ENCODE measurements at regions of chr16 and their contacts with region 1.

Region 1: GRCh38 chr16:1964506-1965395 is at the start of gene RPS2:
- DNase-seq: peak; percentile 95 to 100 (median 98)
- ATAC-seq: peak; percentile 73
- H3K4me3 ChIP-seq: peak within 1 kb of the TSS; percentile 89
- H3K27ac ChIP-seq: peak within 1 kb of the TSS; percentile 85
- H3K4me1 ChIP-seq: peaks cover 8 to 50% of the 10 kb centered on the region in 2 experiments; a peak in 3 of 5 replicates
- H3K27me3 ChIP-seq: no peaks in the 10 kb centered on the region
- CTCF ChIP-seq: no peak
- EP300 ChIP-seq: no peak
- POLR2A ChIP-seq: peak; percentile 100
- RAD21 ChIP-seq: no peak
- polyA plus RNA-seq, gene RPS2: 834 to 1,305 TPM

Region 2: DNA sequence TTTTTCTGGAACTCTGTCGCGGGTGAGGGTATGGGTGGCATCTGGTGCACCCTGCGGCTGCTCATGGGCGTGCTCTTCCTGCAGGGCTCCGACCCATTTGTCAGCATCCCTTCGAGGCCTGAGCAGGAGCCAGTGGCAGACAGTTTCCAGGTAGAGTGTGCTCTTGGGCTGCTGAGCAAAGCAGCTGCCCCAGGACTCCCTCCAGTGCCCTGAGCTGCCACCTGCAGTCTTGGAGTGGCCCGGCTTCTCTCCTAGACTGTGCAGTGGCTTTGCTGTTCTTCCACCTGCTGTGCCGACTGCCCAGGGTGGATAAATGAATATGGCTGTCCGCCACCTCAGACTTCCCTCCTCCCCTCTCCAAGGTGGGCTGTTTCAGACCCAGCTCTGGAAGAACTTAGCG is 297.5 kb before region 1 on chr16:
- CTCF ChIA-PET with region 1: no interaction called
- POLR2A ChIA-PET with region 1: no interaction called
- in situ Hi-C with region 1: no loop called
- intact Hi-C with region 1: no loop called
- DNase-seq: no peak
- ATAC-seq: no peak
- H3K4me3 ChIP-seq: no peak overlapping the region
- H3K27ac ChIP-seq: no peak overlapping the region
- H3K4me1 ChIP-seq: no peaks in the 10 kb centered on the region
- H3K27me3 ChIP-seq: no peaks in the 10 kb centered on the region
- CTCF ChIP-seq: peak in 1 of 3 experiments; percentile 5; a peak in 1 of 6 replicates
- EP300 ChIP-seq: no peak
- POLR2A ChIP-seq: no peak
- RAD21 ChIP-seq: no peak

Region 3: GRCh38 chr16:1772736-1773584 is 191.8 kb before region 1 on chr16 and contains the starts of genes EME2 and MRPS34:
- CTCF ChIA-PET with region 1: no interaction called
- POLR2A ChIA-PET with region 1: interaction called, 11 read pairs
- in situ Hi-C with region 1: no loop called
- intact Hi-C with region 1: no loop called
- DNase-seq: peak; percentile 72 to 93 (median 80)
- ATAC-seq: peak; percentile 75
- H3K4me3 ChIP-seq: peak within 1 kb of the TSS; percentile 96
- H3K27ac ChIP-seq: peak within 1 kb of the TSS; percentile 96
- H3K4me1 ChIP-seq: peaks cover 20 to 97% of the 10 kb centered on the region in 2 experiments; a peak in 4 of 5 replicates
- H3K27me3 ChIP-seq: no peaks in the 10 kb centered on the region
- CTCF ChIP-seq: peak; percentile 77 to 86 (median 80)
- EP300 ChIP-seq: no peak
- POLR2A ChIP-seq: peak; percentile 90
- RAD21 ChIP-seq: peak; percentile 26 to 66; a peak in 3 of 4 replicates
- polyA plus RNA-seq, gene EME2: 0.35 to 0.42 TPM
- polyA plus RNA-seq, gene MRPS34: 5.2 to 10.9 TPM

Region 4: GRCh38 chr16:1942810-1943726 is 21.7 kb before region 1 on chr16 and contains the start of gene MSRB1:
- CTCF ChIA-PET with region 1: no interaction called
- POLR2A ChIA-PET with region 1: interaction called, 28 read pairs
- in situ Hi-C with region 1: no loop called
- intact Hi-C with region 1: loop called (anchors 2 kb)
- DNase-seq: peak; percentile 99 to 100 (median 100)
- ATAC-seq: peak; percentile 95
- H3K4me3 ChIP-seq: peak within 1 kb of the TSS; percentile 78
- H3K27ac ChIP-seq: peak within 1 kb of the TSS; percentile 51
- H3K4me1 ChIP-seq: peaks cover 29 to 76% of the 10 kb centered on the region in 2 experiments
- H3K27me3 ChIP-seq: no peaks in the 10 kb centered on the region
- CTCF ChIP-seq: no peak; a peak in 1 of 6 replicates
- EP300 ChIP-seq: no peak
- POLR2A ChIP-seq: peak; percentile 80
- RAD21 ChIP-seq: no peak
- polyA plus RNA-seq, gene MSRB1: 5.4 to 15.3 TPM

Region 5: DNA sequence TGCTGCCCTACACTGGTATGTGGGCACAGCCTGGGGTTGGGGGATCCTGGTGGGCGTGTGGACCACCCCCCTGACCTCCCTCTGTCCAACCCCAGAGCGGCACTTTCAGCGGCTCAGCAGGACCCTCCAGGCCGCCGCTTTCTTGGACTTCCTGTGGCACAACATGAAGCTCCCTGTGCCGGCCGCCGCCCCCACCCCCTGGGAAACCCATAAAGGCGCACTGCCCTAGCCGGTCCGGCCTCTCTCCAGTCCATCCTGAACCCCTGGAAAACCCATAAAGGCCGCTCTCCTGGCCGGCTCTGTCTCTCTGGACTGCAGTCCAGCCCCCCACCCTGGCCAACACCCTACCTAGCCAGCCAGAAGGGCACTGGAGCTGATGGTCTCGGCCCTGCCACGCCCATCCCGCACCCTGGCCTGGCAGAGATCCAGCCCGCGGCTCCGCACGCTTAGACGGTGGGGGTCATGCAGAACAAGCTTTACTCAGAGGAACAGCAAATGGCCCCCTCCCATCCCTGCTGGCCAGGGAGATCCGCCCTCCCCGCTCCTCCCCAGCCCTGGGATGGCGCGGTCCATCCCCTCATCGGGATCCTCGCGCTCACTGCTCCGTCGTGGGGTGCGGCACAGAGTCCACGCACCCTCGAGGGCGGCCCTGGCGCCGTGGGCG is 13.8 kb after region 1 on chr16:
- CTCF ChIA-PET with region 1: no interaction called
- POLR2A ChIA-PET with region 1: interaction called, 103 read pairs
- in situ Hi-C with region 1: no loop called
- intact Hi-C with region 1: no loop called
- DNase-seq: peak in 1 of 4 experiments; percentile 33
- ATAC-seq: no peak
- H3K4me3 ChIP-seq: no peak overlapping the region
- H3K27ac ChIP-seq: no peak overlapping the region
- H3K4me1 ChIP-seq: peaks cover 0 to 84% of the 10 kb centered on the region in 2 experiments; a peak in 2 of 5 replicates
- H3K27me3 ChIP-seq: no peaks in the 10 kb centered on the region
- CTCF ChIP-seq: no peak
- EP300 ChIP-seq: no peak
- POLR2A ChIP-seq: no peak
- RAD21 ChIP-seq: no peak

Region 6: GRCh38 chr16:1991948-1992703 is 27.4 kb after region 1 on chr16:
- CTCF ChIA-PET with region 1: no interaction called
- POLR2A ChIA-PET with region 1: interaction called, 103 read pairs
- in situ Hi-C with region 1: no loop called
- intact Hi-C with region 1: no loop called
- DNase-seq: peak; percentile 97 to 99 (median 97)
- ATAC-seq: peak; percentile 82
- H3K4me3 ChIP-seq: peak overlapping the region; percentile 64
- H3K27ac ChIP-seq: peak overlapping the region; percentile 94
- H3K4me1 ChIP-seq: peaks cover 29 to 56% of the 10 kb centered on the region in 2 experiments
- H3K27me3 ChIP-seq: no peaks in the 10 kb centered on the region
- CTCF ChIP-seq: no peak
- EP300 ChIP-seq: no peak
- POLR2A ChIP-seq: peak; percentile 73
- RAD21 ChIP-seq: no peak